HCT116 (cell line): ENCODE measurements at regions of chr3 and their contacts with region 1.

Region 1: GRCh38 chr3:128497387-128498126 is 4.6 kb upstream of the GATA2 start:
- DNase-seq: no peak
- ATAC-seq: peak; percentile 68
- H3K4me3 ChIP-seq: no peak overlapping the region
- H3K27ac ChIP-seq: no peak overlapping the region
- H3K4me1 ChIP-seq: peaks cover 0 to 6% of the 10 kb centered on the region in 2 experiments; a peak in 2 of 4 replicates
- H3K27me3 ChIP-seq: no peaks in the 10 kb centered on the region
- CTCF ChIP-seq: peak; percentile 31 to 62 (median 61); a peak in 5 of 6 replicates
- POLR2A ChIP-seq: no peak
- RAD21 ChIP-seq: peak; percentile 57

Region 2: DNA sequence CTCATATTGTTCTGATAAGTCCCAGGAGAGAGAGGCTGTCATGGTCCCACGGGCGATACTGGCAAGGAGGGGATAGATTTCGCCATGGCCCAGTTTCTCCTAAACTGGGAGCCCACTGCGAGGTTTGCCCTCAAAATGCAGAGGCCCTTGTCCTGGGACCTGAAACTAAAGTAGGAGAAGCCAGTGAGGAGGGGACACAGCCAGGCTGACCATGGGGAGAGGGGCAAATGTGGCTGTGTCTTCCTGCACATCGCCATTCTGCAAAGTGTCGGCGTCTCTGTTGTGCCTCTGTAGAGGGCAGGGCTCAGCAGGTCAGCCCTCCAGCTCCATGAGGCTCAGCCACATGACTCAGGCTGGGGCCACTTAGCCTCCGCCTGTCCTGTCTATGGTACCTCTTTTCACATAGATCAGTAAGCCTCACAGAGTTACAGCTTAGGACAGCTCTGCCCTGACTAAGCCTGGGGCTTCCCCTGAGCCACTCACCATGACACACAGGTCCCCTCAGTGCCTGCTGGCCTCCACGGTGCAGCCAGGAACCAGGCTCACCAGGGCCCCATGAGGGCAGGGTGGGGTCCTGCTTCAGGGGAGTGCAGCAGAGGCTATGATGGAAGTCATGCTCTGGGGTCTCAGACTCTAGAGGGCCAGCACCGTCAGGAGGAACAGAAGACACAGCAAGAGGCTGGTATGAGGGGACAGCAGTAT is 1543.3 kb before region 1 on chr3:
- CTCF ChIA-PET with region 1: no interaction called
- POLR2A ChIA-PET with region 1: no interaction called
- RAD21 ChIA-PET with region 1: no interaction called
- intact Hi-C with region 1: no loop called
- DNase-seq: no peak
- ATAC-seq: no peak
- H3K4me3 ChIP-seq: no peak overlapping the region
- H3K27ac ChIP-seq: no peak overlapping the region
- H3K4me1 ChIP-seq: no peaks in the 10 kb centered on the region
- H3K27me3 ChIP-seq: no peaks in the 10 kb centered on the region
- CTCF ChIP-seq: no peak
- POLR2A ChIP-seq: no peak
- RAD21 ChIP-seq: no peak

Region 3: GRCh38 chr3:128195802-128196201 is 301.8 kb before region 1 on chr3:
- CTCF ChIA-PET with region 1: no interaction called
- POLR2A ChIA-PET with region 1: no interaction called
- RAD21 ChIA-PET with region 1: no interaction called
- intact Hi-C with region 1: no loop called
- DNase-seq: no peak
- ATAC-seq: no peak
- H3K4me3 ChIP-seq: no peak overlapping the region
- H3K27ac ChIP-seq: no peak overlapping the region
- H3K4me1 ChIP-seq: no peaks in the 10 kb centered on the region
- H3K27me3 ChIP-seq: no peaks in the 10 kb centered on the region
- CTCF ChIP-seq: no peak
- POLR2A ChIP-seq: no peak
- RAD21 ChIP-seq: no peak

Region 4: DNA sequence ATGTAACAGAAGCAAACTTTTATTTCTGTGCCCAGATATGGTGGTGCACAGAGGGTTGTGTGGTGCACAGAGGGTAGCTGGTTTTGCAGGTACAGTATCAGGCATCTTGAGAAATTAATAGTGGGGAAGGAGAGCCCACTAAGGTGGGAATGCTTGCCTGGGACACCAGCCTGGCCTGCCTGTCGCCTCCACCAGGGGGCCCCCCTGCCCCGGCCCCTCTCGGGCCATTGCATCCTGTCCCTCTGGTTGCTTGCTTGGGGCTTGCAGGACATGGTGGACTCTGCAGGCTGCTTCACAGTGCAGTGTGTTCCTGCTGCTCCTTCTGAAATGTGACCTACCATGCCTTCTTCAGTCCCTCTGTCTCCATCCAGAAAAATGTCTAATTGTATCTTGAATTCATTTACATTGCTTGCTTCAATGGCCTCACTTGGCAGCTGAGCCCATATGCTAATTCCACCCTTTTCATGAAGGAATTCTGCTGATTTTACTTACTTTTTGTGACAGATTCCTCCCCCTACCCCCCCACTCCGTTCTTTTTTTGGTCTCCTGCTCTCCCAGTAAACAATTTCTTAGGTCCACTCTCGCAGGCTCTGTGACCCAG is 270.7 kb before region 1 on chr3:
- CTCF ChIA-PET with region 1: no interaction called
- POLR2A ChIA-PET with region 1: no interaction called
- RAD21 ChIA-PET with region 1: no interaction called
- intact Hi-C with region 1: loop called (anchors 5 kb)
- DNase-seq: peak; percentile 10
- ATAC-seq: peak; percentile 99
- H3K4me3 ChIP-seq: no peak overlapping the region
- H3K27ac ChIP-seq: no peak overlapping the region
- H3K4me1 ChIP-seq: no peaks in the 10 kb centered on the region
- H3K27me3 ChIP-seq: no peaks in the 10 kb centered on the region
- CTCF ChIP-seq: peak; percentile 75 to 97 (median 89)
- POLR2A ChIP-seq: no peak
- RAD21 ChIP-seq: peak; percentile 79